ENCODE measurements at regions of chr17 and their contacts with region 1.

Region 1: GRCh38 chr17:55852734-55853133 is 101.9 kb downstream of the PCTP start:
- DNase-seq: no peak
- ATAC-seq: no peak
- H3K4me3 ChIP-seq: no peak overlapping the region
- H3K27ac ChIP-seq: no peak overlapping the region
- H3K4me1 ChIP-seq: no peaks in the 10 kb centered on the region
- H3K27me3 ChIP-seq: peaks cover 0 to 5% (median 0%) of the 10 kb centered on the region in 7 donors
- CTCF ChIP-seq: no peak

Region 2: GRCh38 chr17:56319517-56319916 is 466.8 kb after region 1 on chr17:
- intact Hi-C with region 1: loop called in 3 of 10 experiments (anchors 10 kb)
- DNase-seq: no peak
- ATAC-seq: peak in 1 of 8 donors; percentile 41
- H3K4me3 ChIP-seq: no peak overlapping the region
- H3K27ac ChIP-seq: no peak overlapping the region
- H3K4me1 ChIP-seq: peaks cover 0 to 37% (median 0%) of the 10 kb centered on the region in 9 donors
- H3K27me3 ChIP-seq: peaks cover 0 to 29% (median 10%) of the 10 kb centered on the region in 7 donors
- CTCF ChIP-seq: peak in 8 of 9 donors; percentile 14 to 60 (median 53)

Region 3: GRCh38 chr17:56325313-56326000 is 472.7 kb after region 1 on chr17:
- intact Hi-C with region 1: loop called in 2 of 10 experiments (anchors 10 kb)
- DNase-seq: no peak
- ATAC-seq: no peak
- H3K4me3 ChIP-seq: no peak overlapping the region
- H3K27ac ChIP-seq: no peak overlapping the region
- H3K4me1 ChIP-seq: peaks cover 0 to 21% (median 0%) of the 10 kb centered on the region in 9 donors
- H3K27me3 ChIP-seq: peaks cover 0 to 28% (median 10%) of the 10 kb centered on the region in 7 donors
- CTCF ChIP-seq: no peak